Sigmoid colon (tissue), 7 donors: ENCODE measurements at regions of chr1 and their contacts with region 1.

Region 1: DNA sequence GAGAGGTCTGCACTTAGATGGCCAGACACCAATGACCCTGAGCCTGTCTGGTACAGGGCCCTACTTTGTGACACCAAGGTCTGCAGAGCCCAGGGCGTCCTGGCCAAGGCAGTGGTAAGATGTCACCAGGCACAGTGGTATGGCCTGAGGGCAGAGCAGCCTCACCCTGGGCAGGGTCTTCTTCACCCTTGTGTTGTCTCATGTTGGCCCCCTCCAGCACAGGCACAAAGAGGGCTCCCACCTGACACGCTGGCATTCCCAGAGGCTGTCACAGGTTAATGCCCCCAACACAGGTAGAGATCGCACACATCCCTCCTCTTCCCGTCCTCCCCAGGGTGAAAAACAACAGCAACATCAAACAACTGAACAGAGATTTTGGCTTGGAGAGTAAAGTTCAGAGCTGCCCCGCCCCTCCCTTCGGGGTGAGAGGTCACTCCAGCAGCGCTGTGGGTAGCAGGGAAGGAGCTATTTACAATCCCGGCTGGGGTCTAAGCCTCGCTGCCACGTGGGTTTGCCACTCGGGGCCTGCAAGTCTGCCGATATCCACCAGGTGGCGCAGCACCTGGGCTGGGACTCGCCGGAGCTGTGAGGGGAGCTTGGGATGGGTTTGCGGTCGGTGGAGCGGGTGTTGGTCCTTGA is 12.6 kb downstream of the EFNA3 start:
- DNase-seq: peak; percentile 89
- H3K4me3 ChIP-seq: no peak overlapping the region
- H3K27ac ChIP-seq: no peak overlapping the region
- H3K4me1 ChIP-seq: peaks cover 0 to 31% (median 27%) of the 10 kb centered on the region in 4 donors
- H3K27me3 ChIP-seq: no peaks in the 10 kb centered on the region
- CTCF ChIP-seq: peak; percentile 96 to 99 (median 98)
- EP300 ChIP-seq: no peak
- POLR2A ChIP-seq: no peak

Region 2: GRCh38 chr1:154546264-154547063 is 544.7 kb before region 1 on chr1:
- intact Hi-C with region 1: no loop called
- DNase-seq: peak; percentile 75
- H3K4me3 ChIP-seq: no peak overlapping the region
- H3K27ac ChIP-seq: no peak overlapping the region
- H3K4me1 ChIP-seq: peaks cover 0 to 15% (median 6%) of the 10 kb centered on the region in 4 donors
- H3K27me3 ChIP-seq: peaks cover 0 to 7% (median 0%) of the 10 kb centered on the region in 3 donors
- CTCF ChIP-seq: peak; percentile 39 to 68 (median 54)
- EP300 ChIP-seq: no peak
- POLR2A ChIP-seq: no peak

Region 3: GRCh38 chr1:155070721-155071569 is 20.2 kb before region 1 on chr1:
- intact Hi-C with region 1: no loop called
- DNase-seq: peak; percentile 90
- H3K4me3 ChIP-seq: peak overlapping the region; percentile 11 to 53 (median 46)
- H3K27ac ChIP-seq: peak overlapping the region; percentile 71 to 81 (median 74)
- H3K4me1 ChIP-seq: peaks cover 0 to 22% (median 16%) of the 10 kb centered on the region in 4 donors
- H3K27me3 ChIP-seq: no peaks in the 10 kb centered on the region
- CTCF ChIP-seq: peak in 3 of 4 experiments; percentile 21 to 57 (median 36)
- EP300 ChIP-seq: no peak
- POLR2A ChIP-seq: no peak

Region 4: DNA sequence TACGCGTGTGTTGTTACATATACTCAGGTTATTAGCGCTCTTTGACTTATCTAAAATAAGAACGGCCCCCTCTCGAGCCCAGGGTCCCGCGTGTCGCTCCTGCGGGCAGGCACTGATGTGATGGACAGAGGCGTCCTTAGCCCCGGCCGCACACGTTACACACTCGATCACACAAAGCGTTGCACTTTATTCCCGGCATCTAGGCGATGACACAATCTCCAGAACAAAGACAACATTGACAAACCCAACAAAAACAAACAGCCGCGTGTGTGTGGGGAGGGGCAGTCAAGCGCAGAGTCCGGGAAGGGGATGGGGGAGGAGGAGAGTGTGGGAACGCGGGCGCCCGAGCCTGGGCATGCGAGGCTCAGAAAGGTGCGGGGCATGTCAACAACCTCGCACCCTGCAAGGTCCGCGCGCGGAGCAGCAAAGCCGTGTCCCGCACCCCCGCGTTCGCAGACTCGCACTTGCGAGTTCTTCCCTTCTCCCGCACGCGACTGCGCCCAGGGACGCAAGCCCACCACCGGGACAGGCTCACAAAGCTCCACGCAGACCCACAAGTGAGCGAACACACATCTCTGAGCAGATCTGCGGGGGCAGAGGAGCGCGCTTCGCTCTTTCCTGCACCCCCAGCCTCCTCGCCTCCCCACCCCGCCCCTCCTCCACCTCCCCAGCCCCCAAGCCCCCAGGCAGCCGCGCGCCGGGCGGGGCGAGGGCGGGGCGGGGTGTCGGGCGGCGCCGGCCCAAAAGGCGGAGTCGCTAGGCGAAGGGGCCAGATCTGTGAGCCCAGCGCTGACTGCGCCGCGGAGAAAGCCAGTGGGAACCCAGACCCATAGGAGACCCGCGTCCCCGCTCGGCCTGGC is 36.1 kb after region 1 on chr1 and contains the start of gene EFNA1:
- intact Hi-C with region 1: loop called (anchors 2 kb)
- DNase-seq: peak; percentile 80
- H3K4me3 ChIP-seq: peak within 1 kb of the TSS; percentile 62 to 65 (median 64)
- H3K27ac ChIP-seq: peak within 1 kb of the TSS; percentile 87 to 99 (median 98)
- H3K4me1 ChIP-seq: peaks cover 0 to 61% (median 47%) of the 10 kb centered on the region in 4 donors
- H3K27me3 ChIP-seq: no peaks in the 10 kb centered on the region
- CTCF ChIP-seq: no peak
- EP300 ChIP-seq: peak in 1 of 4 donors; percentile 26
- POLR2A ChIP-seq: peak; percentile 16 to 83
- total RNA-seq, gene EFNA1: 15.5 to 22.5 (median 16.4) TPM

Region 5: GRCh38 chr1:155135415-155136028 is 44.3 kb after region 1 on chr1 and contains the start of gene SLC50A1:
- intact Hi-C with region 1: loop called (anchors 2 kb)
- DNase-seq: peak; percentile 98
- H3K4me3 ChIP-seq: peak within 1 kb of the TSS; percentile 52 to 72 (median 70)
- H3K27ac ChIP-seq: peak within 1 kb of the TSS; percentile 94 to 99 (median 98)
- H3K4me1 ChIP-seq: peaks cover 0 to 60% (median 41%) of the 10 kb centered on the region in 4 donors
- H3K27me3 ChIP-seq: no peaks in the 10 kb centered on the region
- CTCF ChIP-seq: peak in 3 of 4 experiments; percentile 41 to 79 (median 78)
- EP300 ChIP-seq: no peak
- POLR2A ChIP-seq: peak; percentile 72 to 90
- total RNA-seq, gene SLC50A1: 8.0 to 21.4 (median 14.0) TPM

Region 6: DNA sequence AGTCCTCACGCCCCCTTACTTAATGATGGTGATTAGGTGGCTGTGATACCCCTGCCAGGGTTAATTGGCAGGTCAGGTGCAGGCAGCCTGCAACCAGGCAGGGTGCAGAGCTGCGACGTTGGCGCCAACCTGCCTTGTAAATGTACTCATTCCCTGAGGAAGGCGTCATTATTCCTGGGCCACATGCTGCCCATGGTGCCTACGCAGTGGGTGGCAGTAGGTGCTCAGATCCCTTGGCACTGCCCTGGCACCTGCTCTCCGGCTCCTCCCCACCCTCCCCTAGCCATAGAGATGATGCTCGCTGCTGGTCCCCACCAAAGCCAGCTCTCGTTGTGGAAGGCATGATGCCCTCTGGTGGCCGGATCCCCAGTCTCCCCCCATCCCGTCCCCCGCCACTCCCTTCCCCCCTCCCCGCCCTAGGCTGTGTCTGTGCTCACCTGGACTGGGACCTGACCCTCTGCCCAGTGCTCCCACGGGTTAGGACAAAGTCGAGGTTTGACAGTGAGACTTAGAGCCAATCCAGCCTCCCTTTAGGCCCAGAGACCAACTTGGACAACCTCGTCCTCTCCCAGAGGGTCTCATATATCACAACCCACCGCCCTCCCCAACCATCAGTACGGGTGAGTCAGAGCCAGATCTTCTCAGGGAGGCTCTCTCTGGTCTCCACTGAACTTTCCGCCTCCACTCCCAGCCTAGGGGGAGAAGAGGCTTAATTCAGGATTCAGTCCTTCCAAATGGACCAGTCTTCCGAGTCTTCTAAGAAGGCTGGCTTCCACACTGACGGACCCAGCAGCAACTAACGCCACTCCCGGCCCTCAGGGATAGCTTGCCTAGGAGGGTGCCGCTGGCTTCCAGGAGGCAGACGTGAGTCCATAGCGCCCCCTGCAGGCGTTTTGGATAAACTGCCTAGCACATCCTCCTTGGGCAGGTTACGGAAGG is 76.2 kb after region 1 on chr1:
- intact Hi-C with region 1: loop called (anchors 1 kb)
- DNase-seq: peak; percentile 94
- H3K4me3 ChIP-seq: peak overlapping the region in 2 of 4 donors; percentile 6 to 12
- H3K27ac ChIP-seq: peak overlapping the region; percentile 40 to 62 (median 48)
- H3K4me1 ChIP-seq: peaks cover 0 to 32% (median 25%) of the 10 kb centered on the region in 4 donors
- H3K27me3 ChIP-seq: peaks cover 0 to 7% (median 0%) of the 10 kb centered on the region in 3 donors
- CTCF ChIP-seq: peak; percentile 87 to 95 (median 93)
- EP300 ChIP-seq: no peak
- POLR2A ChIP-seq: no peak